ENCODE measurements at regions of chr2 and their contacts with region 1.

Region 1: DNA sequence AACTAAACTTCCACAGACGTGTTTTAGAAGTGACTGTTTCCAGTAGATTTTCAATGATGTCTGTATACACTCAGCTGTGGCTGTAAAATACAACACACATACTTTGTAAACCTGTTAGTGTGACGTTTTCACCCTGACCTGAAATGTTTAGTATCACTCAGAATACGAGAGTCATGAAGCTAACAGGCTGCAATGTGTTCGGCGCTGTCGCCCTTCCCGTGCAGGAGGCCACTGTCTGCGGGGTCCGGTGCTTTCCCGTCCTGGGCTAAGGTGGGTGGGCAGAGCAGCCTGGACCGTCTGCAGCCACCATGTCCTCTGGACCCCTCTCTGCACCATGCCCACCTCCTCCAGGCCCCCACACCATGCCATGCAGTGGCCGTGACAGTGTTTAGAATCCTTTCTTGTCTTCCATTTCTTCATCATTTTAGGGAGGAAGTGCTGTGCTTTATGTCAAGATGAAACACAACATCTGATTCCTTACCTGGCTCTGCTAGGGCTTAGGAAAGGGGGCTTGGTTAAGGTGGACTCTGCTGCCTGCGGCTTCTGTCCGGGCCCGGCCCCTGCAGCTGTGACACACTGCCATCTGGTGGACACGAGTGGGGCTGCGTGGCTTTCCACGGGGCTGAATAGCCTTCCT is 53.8 kb upstream of the RBM44 start:
- DNase-seq: peak; percentile 54
- ATAC-seq: peak; percentile 93
- H3K4me3 ChIP-seq: no peak overlapping the region
- H3K27ac ChIP-seq: no peak overlapping the region
- H3K4me1 ChIP-seq: peaks cover 14% of the 10 kb centered on the region
- H3K27me3 ChIP-seq: no peaks in the 10 kb centered on the region
- CTCF ChIP-seq: peak; percentile 96
- POLR2A ChIP-seq: peak; percentile 59
- RAD21 ChIP-seq: peak; percentile 99

Region 2: GRCh38 chr2:237122214-237122666 is 622.5 kb before region 1 on chr2:
- CTCF ChIA-PET with region 1: no interaction called
- POLR2A ChIA-PET with region 1: no interaction called
- dilution Hi-C with region 1: no loop called
- in situ Hi-C with region 1: loop called (anchors 25 kb)
- intact Hi-C with region 1: no loop called
- DNase-seq: peak; percentile 87
- ATAC-seq: peak; percentile 94
- H3K4me3 ChIP-seq: no peak overlapping the region
- H3K27ac ChIP-seq: peak overlapping the region; percentile 53; the same call in 1 of the 2 replicates
- H3K4me1 ChIP-seq: peaks cover 13% of the 10 kb centered on the region
- H3K27me3 ChIP-seq: no peaks in the 10 kb centered on the region
- CTCF ChIP-seq: peak; percentile 84
- POLR2A ChIP-seq: 0 out of 2 replicates have a peak, but pooled peaks have one; percentile 34
- RAD21 ChIP-seq: peak; percentile 93

Region 3: GRCh38 chr2:237581751-237582746 is 162.7 kb before region 1 on chr2:
- CTCF ChIA-PET with region 1: interaction called, 20 read pairs
- POLR2A ChIA-PET with region 1: no interaction called
- dilution Hi-C with region 1: no loop called
- in situ Hi-C with region 1: no loop called
- intact Hi-C with region 1: loop called (anchors 1 kb)
- DNase-seq: peak; percentile 71
- ATAC-seq: peak; percentile 92
- H3K4me3 ChIP-seq: no peak overlapping the region
- H3K27ac ChIP-seq: no peak overlapping the region
- H3K4me1 ChIP-seq: no peaks in the 10 kb centered on the region
- H3K27me3 ChIP-seq: peaks cover 4% of the 10 kb centered on the region; the same call in 1 of the 2 replicates
- CTCF ChIP-seq: peak; percentile 66
- POLR2A ChIP-seq: no peak
- RAD21 ChIP-seq: peak; percentile 77

Region 4: DNA sequence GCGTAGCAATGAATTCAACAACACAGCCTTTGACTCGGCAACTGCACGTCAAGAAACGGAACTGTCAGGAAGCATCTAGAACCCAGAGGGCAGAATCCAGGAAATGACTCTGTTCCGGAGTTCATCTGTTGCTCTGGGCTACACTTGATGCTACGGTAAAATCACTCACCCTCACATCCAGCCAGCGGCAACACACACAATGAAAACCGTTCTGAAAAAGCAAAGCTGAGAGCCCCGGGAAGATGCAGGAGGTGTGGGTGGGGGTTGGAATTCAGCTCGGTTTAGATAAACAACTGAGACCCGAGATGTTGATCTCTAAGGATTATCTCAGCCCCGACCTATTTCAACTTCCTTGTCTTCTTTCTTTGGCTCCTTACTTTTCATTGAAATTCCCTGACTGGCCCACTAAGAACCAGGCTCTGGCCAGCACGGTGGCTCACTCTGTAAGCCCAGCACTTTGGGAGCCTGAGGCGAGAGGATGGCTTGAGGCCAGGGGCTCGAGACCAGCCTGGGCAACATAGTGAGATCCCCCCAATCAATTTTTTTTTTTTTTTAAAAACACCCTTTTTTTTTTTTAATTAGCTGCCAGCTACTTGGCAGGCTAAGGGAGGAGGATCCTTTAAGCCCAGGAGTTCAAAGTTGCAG is 140.9 kb before region 1 on chr2:
- CTCF ChIA-PET with region 1: interaction called, 4 read pairs
- POLR2A ChIA-PET with region 1: no interaction called
- dilution Hi-C with region 1: no loop called
- in situ Hi-C with region 1: no loop called
- intact Hi-C with region 1: loop called (anchors 5 kb)
- DNase-seq: peak; percentile 80
- ATAC-seq: peak; percentile 76
- H3K4me3 ChIP-seq: no peak overlapping the region
- H3K27ac ChIP-seq: peak overlapping the region; percentile 15; the same call in 1 of the 2 replicates
- H3K4me1 ChIP-seq: peaks cover 7% of the 10 kb centered on the region
- H3K27me3 ChIP-seq: no peaks in the 10 kb centered on the region
- CTCF ChIP-seq: no peak
- POLR2A ChIP-seq: no peak
- RAD21 ChIP-seq: no peak

Region 5: GRCh38 chr2:237674731-237675276 is 69.9 kb before region 1 on chr2:
- CTCF ChIA-PET with region 1: interaction called, 56 read pairs
- POLR2A ChIA-PET with region 1: no interaction called
- dilution Hi-C with region 1: no loop called
- in situ Hi-C with region 1: loop called (anchors 5 kb)
- intact Hi-C with region 1: loop called (anchors 1 kb)
- DNase-seq: peak; percentile 75
- ATAC-seq: peak; percentile 55
- H3K4me3 ChIP-seq: no peak overlapping the region
- H3K27ac ChIP-seq: peak overlapping the region; percentile 58; the same call in 1 of the 2 replicates
- H3K4me1 ChIP-seq: peaks cover 41% of the 10 kb centered on the region
- H3K27me3 ChIP-seq: no peaks in the 10 kb centered on the region
- CTCF ChIP-seq: no peak
- POLR2A ChIP-seq: no peak
- RAD21 ChIP-seq: peak; percentile 7; the same call in 1 of the 2 replicates